ENCODE measurements at regions of chr21 and their contacts with region 1.

Region 1: GRCh38 chr21:32406405-32406804 is 6.1 kb upstream of the EVA1C start:
- DNase-seq: peak in 1 of 2 donors; percentile 43
- H3K4me3 ChIP-seq: no peak overlapping the region
- H3K27ac ChIP-seq: peak overlapping the region in 2 of 5 donors; percentile 18 to 29
- H3K4me1 ChIP-seq: peaks cover 6 to 22% (median 15%) of the 10 kb centered on the region in 4 donors
- H3K27me3 ChIP-seq: no peaks in the 10 kb centered on the region
- CTCF ChIP-seq: no peak
- EP300 ChIP-seq: no peak
- POLR2A ChIP-seq: no peak

Region 2: GRCh38 chr21:32569261-32570230 is 163.1 kb after region 1 on chr21:
- intact Hi-C with region 1: loop called (anchors 5 kb)
- DNase-seq: peak; percentile 78 to 93
- H3K4me3 ChIP-seq: peak overlapping the region; percentile 53 to 73 (median 60)
- H3K27ac ChIP-seq: peak overlapping the region; percentile 67 to 88 (median 84)
- H3K4me1 ChIP-seq: peaks cover 0 to 17% (median 12%) of the 10 kb centered on the region in 4 donors
- H3K27me3 ChIP-seq: peaks cover 0 to 9% (median 0%) of the 10 kb centered on the region in 3 donors
- CTCF ChIP-seq: peak in 5 of 7 experiments; percentile 7 to 82 (median 67)
- EP300 ChIP-seq: no peak
- POLR2A ChIP-seq: no peak

Region 3: GRCh38 chr21:32826329-32827167 is 420.1 kb after region 1 on chr21:
- intact Hi-C with region 1: no loop called
- DNase-seq: peak in 1 of 2 donors; percentile 85
- H3K4me3 ChIP-seq: no peak overlapping the region
- H3K27ac ChIP-seq: no peak overlapping the region
- H3K4me1 ChIP-seq: no peaks in the 10 kb centered on the region
- H3K27me3 ChIP-seq: peaks cover 0 to 3% (median 0%) of the 10 kb centered on the region in 3 donors
- CTCF ChIP-seq: peak in 5 of 7 experiments; percentile 33 to 54 (median 48)
- EP300 ChIP-seq: no peak
- POLR2A ChIP-seq: no peak

Region 4: DNA sequence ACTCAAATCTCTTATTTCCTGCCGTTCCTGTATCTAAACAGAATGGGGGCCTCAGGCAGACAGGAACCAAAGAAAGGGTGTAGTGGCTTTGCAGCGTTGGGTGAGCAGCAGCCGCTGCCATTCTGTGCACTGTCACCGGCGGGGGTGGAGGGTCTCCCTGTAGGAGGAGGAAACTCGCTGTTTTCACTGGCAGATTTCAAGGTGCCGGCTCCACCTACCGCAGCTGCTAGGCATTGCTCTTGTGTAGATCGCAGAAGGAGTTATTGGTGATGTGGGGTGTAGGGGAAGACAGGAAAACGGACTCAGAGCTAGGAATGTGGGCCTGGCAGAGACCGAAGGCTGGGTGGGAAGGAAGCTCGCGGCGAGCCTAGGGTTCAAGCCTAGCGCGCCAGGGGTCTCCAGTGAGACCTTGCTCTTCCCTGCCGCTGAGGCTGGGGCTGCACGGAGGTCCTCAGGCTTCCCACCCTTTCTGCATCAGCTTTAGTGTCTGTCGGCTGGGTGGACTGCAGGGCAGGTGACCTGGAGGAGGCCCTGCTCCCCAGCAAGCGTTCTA is 1488.4 kb after region 1 on chr21:
- intact Hi-C with region 1: no loop called
- DNase-seq: peak; percentile 57 to 94
- H3K4me3 ChIP-seq: peak overlapping the region; percentile 23 to 39 (median 28)
- H3K27ac ChIP-seq: no peak overlapping the region
- H3K4me1 ChIP-seq: peaks cover 0 to 18% (median 9%) of the 10 kb centered on the region in 4 donors
- H3K27me3 ChIP-seq: no peaks in the 10 kb centered on the region
- CTCF ChIP-seq: peak in 5 of 7 experiments; percentile 43 to 62 (median 46)
- EP300 ChIP-seq: no peak
- POLR2A ChIP-seq: no peak